Transverse colon (tissue), 4 donors: ENCODE measurements at regions of chr10 and their contacts with region 1.

Region 1: DNA sequence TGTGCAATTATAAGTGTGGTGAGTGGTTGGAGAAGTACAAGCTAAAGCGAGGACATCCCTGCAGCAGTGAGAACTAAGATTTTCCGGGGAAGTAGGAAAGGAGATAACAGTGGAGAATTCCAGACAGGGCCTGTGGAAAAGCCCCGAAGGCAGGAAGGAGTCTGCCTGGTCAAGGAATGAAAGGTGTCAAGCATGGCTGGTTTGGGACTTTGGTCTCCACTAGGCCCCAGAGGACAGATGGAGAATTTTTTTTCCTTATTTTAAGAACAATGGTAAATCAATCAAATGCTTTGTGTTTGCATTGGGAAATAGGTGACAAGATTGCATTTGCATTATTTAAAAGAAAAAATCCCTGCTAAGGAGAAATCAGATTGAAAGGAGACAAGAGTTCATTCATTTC is 3.2 kb upstream of the CEP55 start:
- DNase-seq: no peak
- H3K4me3 ChIP-seq: no peak overlapping the region
- H3K27ac ChIP-seq: no peak overlapping the region
- H3K4me1 ChIP-seq: peaks cover 5 to 12% (median 5%) of the 10 kb centered on the region in 4 donors
- H3K27me3 ChIP-seq: no peaks in the 10 kb centered on the region
- CTCF ChIP-seq: no peak
- EP300 ChIP-seq: no peak
- POLR2A ChIP-seq: no peak

Region 2: GRCh38 chr10:93368210-93368609 is 125.0 kb before region 1 on chr10:
- in situ Hi-C with region 1: no loop called
- intact Hi-C with region 1: loop called (anchors 5 kb)
- DNase-seq: no peak
- H3K4me3 ChIP-seq: no peak overlapping the region
- H3K27ac ChIP-seq: no peak overlapping the region
- H3K4me1 ChIP-seq: no peaks in the 10 kb centered on the region
- H3K27me3 ChIP-seq: no peaks in the 10 kb centered on the region
- CTCF ChIP-seq: no peak
- EP300 ChIP-seq: no peak
- POLR2A ChIP-seq: no peak

Region 3: GRCh38 chr10:93554760-93555432 is 61.7 kb after region 1 on chr10:
- in situ Hi-C with region 1: no loop called
- intact Hi-C with region 1: no loop called
- DNase-seq: peak; percentile 83
- H3K4me3 ChIP-seq: no peak overlapping the region
- H3K27ac ChIP-seq: peak overlapping the region in 2 of 4 donors; percentile 5 to 24
- H3K4me1 ChIP-seq: peaks cover 0 to 21% (median 6%) of the 10 kb centered on the region in 4 donors
- H3K27me3 ChIP-seq: no peaks in the 10 kb centered on the region
- CTCF ChIP-seq: peak; percentile 52 to 75 (median 66)
- EP300 ChIP-seq: no peak
- POLR2A ChIP-seq: no peak

Region 4: DNA sequence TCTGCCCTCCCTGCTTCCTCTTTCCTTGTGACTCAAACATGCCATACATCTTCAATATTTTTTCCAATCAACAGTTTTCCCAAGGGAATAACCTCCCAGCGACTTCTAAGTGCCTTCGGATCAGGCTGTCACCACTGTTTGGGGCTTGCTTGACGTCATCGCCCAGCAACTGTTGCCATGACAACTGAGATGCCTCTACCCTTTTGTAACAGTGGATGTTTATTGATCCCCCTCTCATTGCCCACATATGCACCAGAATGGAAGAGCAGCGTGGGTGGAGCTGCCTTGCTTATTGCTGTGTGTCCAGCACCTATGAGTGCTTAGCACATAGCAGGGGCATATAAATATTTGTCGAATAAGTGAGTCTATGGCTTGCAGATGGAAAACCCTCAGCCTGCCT is 87.7 kb after region 1 on chr10:
- in situ Hi-C with region 1: no loop called
- intact Hi-C with region 1: no loop called
- DNase-seq: no peak
- H3K4me3 ChIP-seq: no peak overlapping the region
- H3K27ac ChIP-seq: no peak overlapping the region
- H3K4me1 ChIP-seq: peaks cover 0 to 17% (median 8%) of the 10 kb centered on the region in 4 donors
- H3K27me3 ChIP-seq: no peaks in the 10 kb centered on the region
- CTCF ChIP-seq: no peak
- EP300 ChIP-seq: no peak
- POLR2A ChIP-seq: no peak

Region 5: GRCh38 chr10:93615576-93616235 is 122.5 kb after region 1 on chr10:
- in situ Hi-C with region 1: no loop called
- intact Hi-C with region 1: no loop called
- DNase-seq: no peak
- H3K4me3 ChIP-seq: no peak overlapping the region
- H3K27ac ChIP-seq: no peak overlapping the region
- H3K4me1 ChIP-seq: no peaks in the 10 kb centered on the region
- H3K27me3 ChIP-seq: no peaks in the 10 kb centered on the region
- CTCF ChIP-seq: no peak
- EP300 ChIP-seq: no peak
- POLR2A ChIP-seq: no peak